ENCODE measurements at regions of chr1 and their contacts with region 1.

Region 1: GRCh38 chr1:182084487-182085316 is 23.2 kb upstream of the ZNF648 start:
- DNase-seq: peak; percentile 64 to 97 (median 91)

Region 2: GRCh38 chr1:181479137-181479745 is 605.5 kb before region 1 on chr1:
- intact Hi-C with region 1: loop called (anchors 10 kb)
- DNase-seq: peak in 41 of 42 donors; percentile 32 to 87 (median 68)

Region 3: GRCh38 chr1:182143154-182143657 is 58.5 kb after region 1 on chr1:
- intact Hi-C with region 1: loop called (anchors 2 kb)
- DNase-seq: peak; percentile 87 to 99 (median 96)

Region 4: GRCh38 chr1:182193908-182194550 is 109.3 kb after region 1 on chr1:
- intact Hi-C with region 1: no loop called
- DNase-seq: no peak

Region 5: DNA sequence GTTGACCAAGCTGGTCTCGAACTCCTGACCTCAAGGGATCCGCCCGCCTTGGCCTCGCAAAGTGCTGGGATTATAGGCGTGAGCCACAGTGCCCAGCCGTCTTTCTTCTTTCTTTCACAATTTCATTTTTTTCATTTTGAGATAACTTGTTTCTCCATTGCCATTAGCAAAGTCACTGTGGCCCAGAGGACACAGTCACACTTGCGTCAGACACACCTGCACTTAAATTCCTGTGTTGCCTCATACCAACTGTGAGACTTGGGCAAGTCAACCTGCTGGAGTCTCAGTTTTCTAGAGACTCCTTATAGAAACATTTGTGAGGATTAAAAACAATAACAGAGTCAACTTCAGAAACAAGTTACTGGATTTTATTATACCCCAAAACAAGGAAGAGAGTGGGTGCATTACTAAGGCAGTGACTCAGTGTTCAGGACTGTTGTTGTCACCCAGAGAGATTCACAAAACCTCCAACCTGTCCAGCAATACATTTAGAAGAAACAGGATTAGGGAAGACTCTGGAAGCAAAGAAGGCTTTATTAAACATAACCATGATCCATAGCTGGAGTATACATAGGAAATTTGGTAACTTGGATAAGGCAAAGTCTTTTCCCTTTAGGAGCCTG is 313.2 kb after region 1 on chr1:
- intact Hi-C with region 1: loop called (anchors 2 kb)
- DNase-seq: no peak

Region 6: DNA sequence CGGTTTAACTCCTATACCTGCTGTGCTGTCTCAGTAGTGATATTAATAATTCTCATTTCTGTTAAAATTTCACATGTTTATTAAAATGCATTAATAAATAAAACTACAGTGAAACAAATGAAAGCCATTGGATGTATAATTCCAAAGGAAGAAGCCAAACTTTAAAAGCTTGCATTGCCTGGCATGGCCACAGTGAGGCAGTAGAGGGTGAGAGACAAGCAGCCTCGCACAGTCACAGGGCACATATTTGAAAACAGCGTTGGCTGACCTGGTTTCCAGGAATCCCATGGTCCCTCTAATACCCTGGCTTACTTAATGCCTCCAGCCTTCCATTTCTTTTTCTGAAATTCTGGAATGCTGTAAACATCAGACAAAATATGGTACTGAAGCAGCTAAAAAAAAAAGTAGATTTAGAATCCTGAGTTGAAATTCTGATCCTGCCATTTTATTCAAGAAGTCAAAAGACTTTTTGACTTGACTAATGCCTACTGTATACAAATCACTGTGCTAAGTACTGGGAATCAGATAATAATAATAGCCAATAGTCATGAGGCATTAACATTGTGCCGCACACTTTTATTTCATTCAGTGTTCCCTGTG is 511.0 kb after region 1 on chr1:
- intact Hi-C with region 1: loop called (anchors 10 kb)
- DNase-seq: peak; percentile 40 to 91 (median 78)